ENCODE measurements at regions of chr9 and their contacts with region 1.

Region 1: GRCh38 chr9:93962561-93963440 is 7.6 kb upstream of the BARX1 start:
- DNase-seq: peak; percentile 11
- ATAC-seq: peak; percentile 91
- H3K4me3 ChIP-seq: no peak overlapping the region
- H3K27ac ChIP-seq: no peak overlapping the region
- H3K4me1 ChIP-seq: no peaks in the 10 kb centered on the region
- H3K27me3 ChIP-seq: peaks cover 14% of the 10 kb centered on the region in 2 experiments
- CTCF ChIP-seq: peak; percentile 71 to 83 (median 80)
- EP300 ChIP-seq: no peak
- POLR2A ChIP-seq: no peak
- RAD21 ChIP-seq: peak; percentile 79

Region 2: DNA sequence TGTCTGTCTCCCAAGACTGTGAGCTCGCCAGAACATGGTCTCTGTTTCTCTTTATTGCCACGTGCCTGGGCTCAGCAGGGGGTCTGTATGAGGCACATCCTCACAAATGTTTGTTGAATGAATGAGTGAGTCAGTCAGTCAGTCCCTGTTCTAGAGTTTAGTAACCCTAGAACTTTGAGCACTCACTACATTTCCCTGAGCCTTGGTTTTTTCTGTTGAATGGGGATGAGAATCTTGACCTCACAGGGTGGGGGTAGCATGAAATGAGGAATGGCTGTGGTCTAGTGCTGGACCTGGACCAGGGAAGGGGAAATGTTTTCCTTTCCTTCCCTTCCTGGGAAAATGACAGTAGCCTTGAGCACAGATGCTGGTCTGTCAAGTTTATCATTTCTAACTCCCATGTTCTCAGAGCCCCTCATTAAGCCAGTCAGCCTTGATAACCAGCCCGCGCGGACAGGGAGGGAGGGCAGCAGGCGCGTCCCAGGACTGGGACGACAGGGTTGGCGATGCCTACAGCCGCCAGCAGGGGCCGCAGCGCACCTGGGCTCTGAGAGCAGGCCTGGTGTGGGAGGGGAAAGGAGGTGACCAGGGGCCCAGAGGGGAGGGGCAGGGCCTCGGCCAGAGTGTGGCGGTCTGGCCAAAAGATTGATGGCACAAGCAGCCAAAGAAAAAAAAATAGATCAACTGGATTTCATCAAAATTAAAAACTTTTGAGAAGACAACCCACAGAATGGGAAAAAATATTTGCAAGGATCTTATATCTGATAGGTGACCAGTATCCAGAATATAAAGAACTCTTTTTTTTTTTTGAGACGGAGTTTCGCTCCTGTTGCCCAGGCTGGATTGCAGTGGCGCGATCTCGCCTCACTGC is 803.0 kb before region 1 on chr9:
- CTCF ChIA-PET with region 1: interaction called, 4 read pairs
- POLR2A ChIA-PET with region 1: no interaction called
- RAD21 ChIA-PET with region 1: no interaction called
- SMC1A ChIA-PET with region 1: no interaction called
- in situ Hi-C with region 1: loop called (anchors 10 kb)
- intact Hi-C with region 1: loop called (anchors 2 kb)
- DNase-seq: no peak
- ATAC-seq: peak; percentile 98
- H3K4me3 ChIP-seq: no peak overlapping the region
- H3K27ac ChIP-seq: no peak overlapping the region
- H3K4me1 ChIP-seq: peaks cover 5% of the 10 kb centered on the region
- H3K27me3 ChIP-seq: no peaks in the 10 kb centered on the region; a peak in 1 of 4 replicates
- CTCF ChIP-seq: peak; percentile 98 to 100 (median 98); a peak in 5 of 6 replicates
- EP300 ChIP-seq: no peak
- POLR2A ChIP-seq: no peak
- RAD21 ChIP-seq: peak; percentile 98

Region 3: GRCh38 chr9:93682232-93682968 is 280.4 kb before region 1 on chr9:
- CTCF ChIA-PET with region 1: interaction called, 36 read pairs
- POLR2A ChIA-PET with region 1: no interaction called
- RAD21 ChIA-PET with region 1: interaction called, 4 read pairs
- SMC1A ChIA-PET with region 1: interaction called, 5 read pairs
- in situ Hi-C with region 1: loop called (anchors 5 kb)
- intact Hi-C with region 1: loop called (anchors 1 kb)
- DNase-seq: no peak
- ATAC-seq: peak; percentile 91
- H3K4me3 ChIP-seq: no peak overlapping the region
- H3K27ac ChIP-seq: no peak overlapping the region
- H3K4me1 ChIP-seq: no peaks in the 10 kb centered on the region
- H3K27me3 ChIP-seq: no peaks in the 10 kb centered on the region
- CTCF ChIP-seq: peak; percentile 75 to 80 (median 79)
- EP300 ChIP-seq: no peak
- POLR2A ChIP-seq: no peak
- RAD21 ChIP-seq: peak; percentile 88

Region 4: DNA sequence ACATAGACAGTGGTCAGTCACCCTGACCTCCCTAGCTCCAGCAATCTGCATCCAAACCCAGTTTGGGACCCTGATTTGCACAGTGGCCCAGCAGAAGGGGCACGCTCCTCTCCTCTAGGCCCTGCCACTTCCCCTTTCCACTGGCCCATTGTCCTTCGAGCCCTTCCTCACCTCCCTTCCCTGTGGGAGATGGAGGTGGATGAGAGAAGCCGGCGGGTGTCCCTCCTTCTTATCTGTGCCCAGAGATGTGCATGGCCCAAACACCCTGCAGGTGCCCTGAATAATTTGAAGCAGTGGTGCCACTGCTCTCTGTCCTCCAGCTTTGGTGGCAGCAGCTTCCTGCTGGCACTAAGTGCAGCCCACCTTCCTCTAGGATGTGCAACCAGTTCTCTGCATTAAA is 147.7 kb before region 1 on chr9:
- CTCF ChIA-PET with region 1: no interaction called
- POLR2A ChIA-PET with region 1: no interaction called
- RAD21 ChIA-PET with region 1: no interaction called
- SMC1A ChIA-PET with region 1: no interaction called
- in situ Hi-C with region 1: no loop called
- intact Hi-C with region 1: no loop called
- DNase-seq: no peak
- ATAC-seq: no peak
- H3K4me3 ChIP-seq: no peak overlapping the region
- H3K27ac ChIP-seq: no peak overlapping the region
- H3K4me1 ChIP-seq: no peaks in the 10 kb centered on the region
- H3K27me3 ChIP-seq: no peaks in the 10 kb centered on the region; a peak in 1 of 4 replicates
- CTCF ChIP-seq: no peak
- EP300 ChIP-seq: no peak
- POLR2A ChIP-seq: no peak
- RAD21 ChIP-seq: no peak

Region 5: DNA sequence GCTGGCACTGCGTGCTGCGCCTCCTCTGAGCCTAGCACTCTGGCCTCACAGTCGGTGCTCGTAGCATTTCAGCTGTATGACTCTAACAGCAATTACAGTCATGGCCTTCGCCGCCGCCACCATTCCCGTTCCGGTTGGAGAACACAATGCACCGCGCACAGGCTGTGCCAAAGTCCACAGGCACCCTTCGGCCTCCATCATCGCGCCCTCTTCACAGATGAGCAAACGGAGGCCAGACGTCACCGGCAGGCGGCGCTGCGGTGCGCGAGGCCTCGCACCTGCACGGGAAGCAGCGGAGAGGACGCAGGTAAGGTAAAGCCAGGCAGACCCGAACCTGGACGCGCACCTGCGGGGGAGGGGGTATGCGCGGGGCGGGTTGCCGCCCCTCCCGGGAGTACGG is 136.6 kb before region 1 on chr9:
- CTCF ChIA-PET with region 1: interaction called, 4 read pairs
- POLR2A ChIA-PET with region 1: no interaction called
- RAD21 ChIA-PET with region 1: no interaction called
- SMC1A ChIA-PET with region 1: interaction called, 3 read pairs
- in situ Hi-C with region 1: no loop called
- intact Hi-C with region 1: loop called (anchors 1 kb)
- DNase-seq: no peak
- ATAC-seq: peak; percentile 76
- H3K4me3 ChIP-seq: no peak overlapping the region
- H3K27ac ChIP-seq: no peak overlapping the region
- H3K4me1 ChIP-seq: no peaks in the 10 kb centered on the region
- H3K27me3 ChIP-seq: peaks cover 0 to 1% of the 10 kb centered on the region in 2 experiments; a peak in 2 of 4 replicates
- CTCF ChIP-seq: peak; percentile 43 to 77 (median 44)
- EP300 ChIP-seq: no peak
- POLR2A ChIP-seq: no peak
- RAD21 ChIP-seq: no peak

Measured in GM12878 (cell line).